ENCODE measurements at regions of chr3 and their contacts with region 1.

Region 1: DNA sequence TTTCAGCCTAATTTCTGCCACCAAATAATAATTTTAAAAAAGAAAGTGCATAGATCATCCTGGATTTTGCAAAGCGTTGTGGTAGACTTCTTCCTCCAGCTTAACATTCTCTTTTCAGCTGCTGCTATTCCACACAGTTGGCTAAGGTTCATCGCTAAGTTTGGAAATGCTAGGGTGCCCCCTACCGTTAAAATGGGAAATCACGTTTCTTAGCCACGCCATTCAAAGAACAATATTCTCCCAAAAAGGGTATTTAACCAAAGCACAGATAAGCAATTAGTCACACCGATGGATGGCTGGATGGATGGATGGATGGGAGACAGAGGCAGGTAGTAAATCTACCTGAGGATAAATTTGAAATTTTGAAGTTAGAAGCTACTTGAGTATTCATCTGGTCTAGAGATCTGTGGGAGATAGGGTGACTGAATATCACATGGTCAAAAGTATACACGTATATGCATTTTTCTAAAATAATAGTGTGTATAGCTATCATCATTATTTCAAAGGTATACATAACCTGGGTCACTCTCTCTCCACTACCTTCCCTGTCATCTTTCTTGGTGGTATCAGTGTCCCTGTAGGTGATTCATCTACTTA is 67.2 kb downstream of the EFHB start:
- DNase-seq: peak in 5 of 10 donors; percentile 41 to 84 (median 47)

Region 2: GRCh38 chr3:19348929-19349564 is 517.8 kb before region 1 on chr3:
- intact Hi-C with region 1: loop called (anchors 2 kb)
- DNase-seq: no peak

Region 3: GRCh38 chr3:19543212-19543841 is 323.5 kb before region 1 on chr3:
- intact Hi-C with region 1: loop called (anchors 10 kb)
- DNase-seq: peak in 1 of 10 donors; percentile 12

Region 4: GRCh38 chr3:19920401-19921075 is 53.7 kb after region 1 on chr3:
- intact Hi-C with region 1: no loop called
- DNase-seq: no peak

Measured in posterior cingulate gyrus (tissue), 11 donors.